ENCODE measurements at regions of chr12 and their contacts with region 1.

Region 1: DNA sequence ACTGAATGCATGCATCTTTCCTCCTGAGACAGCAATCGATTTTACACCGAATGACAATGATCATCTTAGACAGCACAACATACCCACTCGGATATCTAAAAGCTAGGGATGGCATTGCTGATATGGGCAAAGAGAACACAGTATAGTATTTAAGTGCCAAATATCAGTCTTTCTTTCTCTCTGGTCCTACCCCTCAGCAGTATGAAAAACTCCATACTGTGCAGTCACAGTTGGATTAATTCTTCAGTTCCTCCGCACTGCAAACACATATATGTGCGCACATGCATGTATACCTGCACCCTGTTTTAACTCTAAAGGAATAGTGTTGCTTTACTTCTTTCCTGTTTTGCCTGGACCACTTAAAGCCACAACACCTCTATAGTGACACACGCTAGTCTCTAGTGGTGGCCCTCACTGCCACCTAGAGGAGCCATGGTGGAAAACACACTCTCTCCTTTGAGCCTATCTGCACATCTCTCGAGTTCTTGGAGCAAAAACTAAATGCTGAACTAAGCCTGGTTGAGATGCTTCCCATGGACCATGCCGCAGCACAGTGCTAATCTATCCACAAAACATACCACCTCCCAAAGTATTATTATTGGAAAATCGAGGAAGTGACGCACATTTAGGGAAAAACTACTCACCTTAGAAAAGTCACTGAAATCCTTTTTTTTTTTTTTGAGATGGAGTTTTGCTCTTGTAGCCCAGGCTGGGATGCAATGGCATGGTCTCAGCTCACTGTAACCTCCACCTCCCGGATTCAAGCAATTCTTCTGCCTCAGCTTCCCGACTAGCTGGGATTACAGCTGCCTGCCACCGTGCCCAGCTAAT is 11.9 kb downstream of the TMEM52B start:
- DNase-seq: peak in 1 of 2 donors; percentile 78
- H3K4me3 ChIP-seq: no peak overlapping the region
- H3K27ac ChIP-seq: no peak overlapping the region
- H3K4me1 ChIP-seq: no peaks in the 10 kb centered on the region
- H3K27me3 ChIP-seq: no peaks in the 10 kb centered on the region
- CTCF ChIP-seq: peak; percentile 34 to 71 (median 64)

Region 2: GRCh38 chr12:10153271-10154144 is 37.3 kb before region 1 on chr12:
- intact Hi-C with region 1: loop called (anchors 1 kb)
- DNase-seq: peak in 1 of 2 donors; percentile 84
- H3K4me3 ChIP-seq: peak overlapping the region; percentile 65 to 79
- H3K27ac ChIP-seq: peak overlapping the region; percentile 75 to 77
- H3K4me1 ChIP-seq: peaks cover 0 to 3% of the 10 kb centered on the region in 2 donors
- H3K27me3 ChIP-seq: no peaks in the 10 kb centered on the region
- CTCF ChIP-seq: peak; percentile 66 to 78 (median 76)

Region 3: DNA sequence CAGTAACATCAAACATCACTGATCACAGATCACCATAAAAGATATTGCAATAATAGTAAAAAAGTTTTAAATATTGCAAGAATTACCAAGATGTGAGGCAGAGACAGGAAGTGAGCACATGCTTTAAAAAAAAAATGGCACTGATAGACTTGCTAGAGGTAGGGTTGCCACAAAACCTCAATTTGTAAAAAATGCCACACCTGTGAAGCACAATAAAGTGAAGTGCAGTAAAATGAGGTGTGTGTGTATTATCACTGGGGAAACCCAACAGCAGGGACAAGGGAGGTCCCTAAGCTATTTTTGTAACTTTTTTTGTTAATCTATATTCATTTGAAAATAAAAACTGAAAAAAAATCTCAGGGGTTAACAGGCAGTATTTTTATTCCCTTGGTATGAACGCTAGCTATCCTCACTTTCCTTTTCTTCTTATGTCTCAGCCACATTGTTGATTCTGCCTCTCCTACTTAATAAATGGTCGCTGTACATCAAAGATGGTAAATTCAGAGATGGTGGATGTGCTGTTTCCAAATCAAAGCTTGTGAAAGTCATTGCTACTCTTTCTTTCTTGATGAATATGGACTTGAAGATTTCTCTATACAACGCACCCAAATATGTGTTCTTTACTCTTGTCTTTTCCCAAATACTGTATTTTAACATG is 102.9 kb after region 1 on chr12:
- intact Hi-C with region 1: no loop called
- DNase-seq: no peak
- H3K4me3 ChIP-seq: no peak overlapping the region
- H3K27ac ChIP-seq: no peak overlapping the region
- H3K4me1 ChIP-seq: no peaks in the 10 kb centered on the region
- H3K27me3 ChIP-seq: no peaks in the 10 kb centered on the region
- CTCF ChIP-seq: no peak

Measured in ascending aorta (tissue), 2 donors.